T-cell (primary cell): ENCODE measurements at regions of chr14 and their contacts with region 1.

Region 1: GRCh38 chr14:22570132-22570949 is 18.7 kb downstream of the DAD1 start:
- DNase-seq: peak; percentile 62 to 98 (median 86)
- ATAC-seq: peak; percentile 86 to 90 (median 90)
- H3K4me3 ChIP-seq: peak overlapping the region; percentile 41 to 48
- H3K4me3 Mint-ChIP-seq: peak overlapping the region; percentile 64 to 77 (median 75)
- H3K27ac ChIP-seq: peak overlapping the region; percentile 99
- H3K27ac Mint-ChIP-seq: peak overlapping the region; percentile 98 to 99
- H3K4me1 ChIP-seq: peaks cover 40 to 41% of the 10 kb centered on the region in 2 experiments
- H3K4me1 Mint-ChIP-seq: peaks cover 44 to 69% (median 67%) of the 10 kb centered on the region in 3 donors
- H3K27me3 ChIP-seq: no peaks in the 10 kb centered on the region
- H3K27me3 Mint-ChIP-seq: no peaks in the 10 kb centered on the region

Region 2: GRCh38 chr14:22531451-22532344 is 38.6 kb before region 1 on chr14:
- CTCF ChIA-PET with region 1: interaction called, 3 to 16 read pairs
- POLR2A ChIA-PET with region 1: interaction called in 1 of 2 experiments, 5 read pairs
- DNase-seq: peak in 2 of 35 experiments; percentile 25 to 58
- ATAC-seq: peak; percentile 53 to 63 (median 56)
- H3K4me3 ChIP-seq: peak overlapping the region; percentile 38 to 40
- H3K4me3 Mint-ChIP-seq: peak overlapping the region; percentile 74 to 86 (median 85)
- H3K27ac ChIP-seq: peak overlapping the region; percentile 88
- H3K27ac Mint-ChIP-seq: peak overlapping the region; percentile 93 to 99
- H3K4me1 ChIP-seq: peaks cover 74 to 79% of the 10 kb centered on the region in 2 experiments
- H3K4me1 Mint-ChIP-seq: peaks cover 90 to 91% (median 91%) of the 10 kb centered on the region in 3 donors
- H3K27me3 ChIP-seq: no peaks in the 10 kb centered on the region
- H3K27me3 Mint-ChIP-seq: no peaks in the 10 kb centered on the region

Region 3: DNA sequence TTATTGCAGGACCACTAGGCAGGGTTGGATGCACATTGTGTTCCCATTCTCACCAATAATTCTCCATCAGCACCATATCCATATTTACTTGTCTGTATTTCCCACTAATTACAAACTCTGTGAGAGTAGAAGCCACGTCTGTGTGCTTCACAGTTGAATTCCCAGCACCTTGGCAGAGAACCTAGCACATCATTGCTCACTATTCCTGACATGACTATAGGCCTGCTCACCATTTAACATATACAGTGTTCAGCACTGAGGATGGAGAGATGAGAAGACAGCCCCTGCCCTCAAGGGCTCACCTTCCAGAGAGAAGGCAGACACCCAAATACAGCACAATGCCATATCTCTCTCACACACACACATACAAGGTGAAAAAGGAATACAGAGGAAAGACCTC is 13.7 kb after region 1 on chr14:
- CTCF ChIA-PET with region 1: interaction called, 5 to 82 read pairs
- POLR2A ChIA-PET with region 1: interaction called, 5 to 11 read pairs
- DNase-seq: no peak
- ATAC-seq: no peak
- H3K4me3 ChIP-seq: no peak overlapping the region
- H3K4me3 Mint-ChIP-seq: peak overlapping the region in 2 of 3 donors; percentile 34 to 93
- H3K27ac ChIP-seq: peak overlapping the region; percentile 21
- H3K27ac Mint-ChIP-seq: peak overlapping the region; percentile 99 to 100
- H3K4me1 ChIP-seq: peaks cover 31 to 42% of the 10 kb centered on the region in 2 experiments
- H3K4me1 Mint-ChIP-seq: peaks cover 78 to 80% (median 79%) of the 10 kb centered on the region in 3 donors
- H3K27me3 ChIP-seq: no peaks in the 10 kb centered on the region
- H3K27me3 Mint-ChIP-seq: no peaks in the 10 kb centered on the region

Region 4: GRCh38 chr14:22653012-22653621 is 82.8 kb after region 1 on chr14:
- CTCF ChIA-PET with region 1: interaction called, 3 to 17 read pairs
- POLR2A ChIA-PET with region 1: interaction called in 1 of 2 experiments, 4 read pairs
- DNase-seq: peak in 34 of 35 experiments; percentile 2 to 70 (median 26)
- ATAC-seq: peak; percentile 77 to 89 (median 84)
- H3K4me3 ChIP-seq: no peak overlapping the region
- H3K4me3 Mint-ChIP-seq: no peak overlapping the region
- H3K27ac ChIP-seq: no peak overlapping the region
- H3K27ac Mint-ChIP-seq: no peak overlapping the region
- H3K4me1 ChIP-seq: no peaks in the 10 kb centered on the region
- H3K4me1 Mint-ChIP-seq: no peaks in the 10 kb centered on the region
- H3K27me3 ChIP-seq: no peaks in the 10 kb centered on the region
- H3K27me3 Mint-ChIP-seq: no peaks in the 10 kb centered on the region

Region 5: DNA sequence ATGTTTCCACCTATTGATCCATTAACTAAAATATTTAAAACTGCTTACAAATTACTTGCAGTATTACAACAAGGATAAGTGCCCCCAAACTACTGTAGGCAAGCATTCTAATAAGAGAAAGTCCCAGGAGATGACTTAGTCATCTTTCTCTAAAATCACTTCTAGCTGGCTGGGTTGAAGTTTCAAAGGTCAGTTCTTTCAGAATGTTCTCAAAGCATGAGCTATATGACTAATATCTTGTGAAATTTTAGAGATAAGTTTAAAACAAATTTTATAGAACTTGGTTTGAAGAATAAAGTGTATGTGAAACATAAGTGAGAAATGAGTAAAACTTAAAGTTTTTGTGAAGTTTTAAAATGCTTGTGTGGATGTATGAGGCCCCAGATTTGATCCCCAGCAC is 98.1 kb after region 1 on chr14:
- CTCF ChIA-PET with region 1: no interaction called
- POLR2A ChIA-PET with region 1: no interaction called
- DNase-seq: no peak
- ATAC-seq: no peak
- H3K4me3 ChIP-seq: no peak overlapping the region
- H3K4me3 Mint-ChIP-seq: no peak overlapping the region
- H3K27ac ChIP-seq: no peak overlapping the region
- H3K27ac Mint-ChIP-seq: no peak overlapping the region
- H3K4me1 ChIP-seq: no peaks in the 10 kb centered on the region
- H3K4me1 Mint-ChIP-seq: no peaks in the 10 kb centered on the region
- H3K27me3 ChIP-seq: peaks cover 0 to 5% of the 10 kb centered on the region in 2 experiments
- H3K27me3 Mint-ChIP-seq: no peaks in the 10 kb centered on the region

Region 6: DNA sequence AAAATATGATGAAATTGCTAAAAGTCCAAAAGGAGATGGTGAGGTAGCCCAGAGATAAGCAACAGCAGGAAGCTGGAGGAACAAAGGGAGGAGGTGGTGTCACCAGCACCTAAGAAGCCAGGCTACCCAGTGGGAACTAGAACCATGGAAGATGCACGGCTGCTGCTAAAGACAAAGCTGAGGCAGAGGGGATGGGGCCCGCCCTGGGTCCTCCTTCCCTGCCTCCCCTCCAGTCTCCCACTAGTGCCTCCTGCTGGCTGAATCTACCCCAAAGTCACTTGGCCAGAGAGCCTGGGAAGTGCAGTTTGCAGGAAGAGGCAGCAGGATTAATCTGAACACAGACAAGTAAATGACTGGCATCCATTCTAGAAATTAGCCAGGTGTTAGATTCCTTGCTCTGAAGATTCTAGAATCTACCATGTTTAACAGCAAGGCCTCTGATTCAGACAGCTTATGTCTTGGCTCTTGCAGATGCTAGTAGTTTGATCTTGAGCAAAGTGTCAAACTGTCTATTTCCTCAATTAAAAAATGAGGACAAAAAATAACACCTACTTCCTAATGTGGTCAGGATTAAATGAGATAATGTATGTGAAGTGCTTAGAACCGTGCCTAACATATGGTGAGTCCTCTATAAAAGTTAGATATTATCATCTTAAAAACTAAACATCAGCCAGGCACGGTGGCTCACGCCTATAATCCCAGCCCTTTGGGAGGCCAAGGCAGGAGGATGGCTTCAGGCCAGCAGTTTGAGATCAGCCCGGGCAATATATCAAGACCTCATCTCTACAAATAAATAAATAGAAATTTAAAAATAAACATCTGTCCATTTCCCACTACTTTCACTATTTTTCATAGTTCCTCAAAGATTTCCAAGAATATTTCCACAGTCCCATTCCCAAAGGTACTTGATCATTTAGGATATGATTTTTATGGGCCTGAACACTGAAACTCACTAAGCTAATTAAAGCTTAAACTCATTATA is 295.4 kb after region 1 on chr14:
- CTCF ChIA-PET with region 1: interaction called, 8 to 11 read pairs
- POLR2A ChIA-PET with region 1: no interaction called
- DNase-seq: peak in 1 of 35 experiments; percentile 27
- ATAC-seq: no peak
- H3K4me3 ChIP-seq: no peak overlapping the region
- H3K4me3 Mint-ChIP-seq: no peak overlapping the region
- H3K27ac ChIP-seq: no peak overlapping the region
- H3K27ac Mint-ChIP-seq: peak overlapping the region in 1 of 2 donors; percentile 55
- H3K4me1 ChIP-seq: peaks cover 5 to 16% of the 10 kb centered on the region in 2 experiments
- H3K4me1 Mint-ChIP-seq: peaks cover 15 to 30% (median 22%) of the 10 kb centered on the region in 3 donors
- H3K27me3 ChIP-seq: peaks cover 0 to 9% of the 10 kb centered on the region in 2 experiments
- H3K27me3 Mint-ChIP-seq: no peaks in the 10 kb centered on the region

Region 7: DNA sequence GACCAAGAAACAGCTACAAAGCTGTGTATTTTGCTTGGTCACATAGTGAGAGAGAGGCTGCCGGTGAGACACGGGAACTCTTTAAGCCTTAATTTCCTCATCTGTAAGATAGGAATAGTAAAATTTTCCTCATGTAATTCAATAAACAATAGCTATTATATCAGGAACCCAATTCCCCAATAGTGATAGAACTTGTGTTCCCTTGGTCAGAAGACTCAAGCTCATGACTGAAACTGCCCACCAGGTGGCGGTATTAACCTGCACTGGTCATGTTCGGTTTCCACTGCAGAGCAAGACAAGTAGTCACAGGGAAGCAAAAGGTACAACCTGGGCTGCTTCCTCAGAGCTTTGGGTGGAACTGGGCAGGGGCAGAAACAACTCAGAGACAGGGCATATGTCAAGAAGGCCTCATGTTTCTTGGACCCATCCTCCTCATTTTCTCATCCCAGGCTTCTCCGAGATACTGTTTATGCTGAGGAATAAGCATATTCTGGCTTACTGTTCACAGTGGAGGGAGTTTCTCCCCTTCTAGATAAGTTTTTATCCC is 416.2 kb after region 1 on chr14:
- CTCF ChIA-PET with region 1: interaction called, 5 to 34 read pairs
- POLR2A ChIA-PET with region 1: no interaction called
- DNase-seq: peak; percentile 70 to 95 (median 84)
- ATAC-seq: peak; percentile 58 to 70 (median 64)
- H3K4me3 ChIP-seq: no peak overlapping the region
- H3K4me3 Mint-ChIP-seq: no peak overlapping the region
- H3K27ac ChIP-seq: no peak overlapping the region
- H3K27ac Mint-ChIP-seq: no peak overlapping the region
- H3K4me1 ChIP-seq: peaks cover 0 to 20% of the 10 kb centered on the region in 2 experiments
- H3K4me1 Mint-ChIP-seq: peaks cover 0 to 1% (median 0%) of the 10 kb centered on the region in 3 donors
- H3K27me3 ChIP-seq: peaks cover 0 to 12% of the 10 kb centered on the region in 2 experiments
- H3K27me3 Mint-ChIP-seq: no peaks in the 10 kb centered on the region